PC-3 (cell line): ENCODE measurements at regions of chr5 and their contacts with region 1.

Region 1: GRCh38 chr5:142841511-142842265 is 71.5 kb downstream of the ARHGAP26 start:
- DNase-seq: no peak
- ATAC-seq: no peak
- H3K4me3 ChIP-seq: no peak overlapping the region
- H3K27ac ChIP-seq: no peak overlapping the region
- H3K4me1 ChIP-seq: peaks cover 45% of the 10 kb centered on the region
- H3K27me3 ChIP-seq: no peaks in the 10 kb centered on the region
- CTCF ChIP-seq: no peak

Region 2: DNA sequence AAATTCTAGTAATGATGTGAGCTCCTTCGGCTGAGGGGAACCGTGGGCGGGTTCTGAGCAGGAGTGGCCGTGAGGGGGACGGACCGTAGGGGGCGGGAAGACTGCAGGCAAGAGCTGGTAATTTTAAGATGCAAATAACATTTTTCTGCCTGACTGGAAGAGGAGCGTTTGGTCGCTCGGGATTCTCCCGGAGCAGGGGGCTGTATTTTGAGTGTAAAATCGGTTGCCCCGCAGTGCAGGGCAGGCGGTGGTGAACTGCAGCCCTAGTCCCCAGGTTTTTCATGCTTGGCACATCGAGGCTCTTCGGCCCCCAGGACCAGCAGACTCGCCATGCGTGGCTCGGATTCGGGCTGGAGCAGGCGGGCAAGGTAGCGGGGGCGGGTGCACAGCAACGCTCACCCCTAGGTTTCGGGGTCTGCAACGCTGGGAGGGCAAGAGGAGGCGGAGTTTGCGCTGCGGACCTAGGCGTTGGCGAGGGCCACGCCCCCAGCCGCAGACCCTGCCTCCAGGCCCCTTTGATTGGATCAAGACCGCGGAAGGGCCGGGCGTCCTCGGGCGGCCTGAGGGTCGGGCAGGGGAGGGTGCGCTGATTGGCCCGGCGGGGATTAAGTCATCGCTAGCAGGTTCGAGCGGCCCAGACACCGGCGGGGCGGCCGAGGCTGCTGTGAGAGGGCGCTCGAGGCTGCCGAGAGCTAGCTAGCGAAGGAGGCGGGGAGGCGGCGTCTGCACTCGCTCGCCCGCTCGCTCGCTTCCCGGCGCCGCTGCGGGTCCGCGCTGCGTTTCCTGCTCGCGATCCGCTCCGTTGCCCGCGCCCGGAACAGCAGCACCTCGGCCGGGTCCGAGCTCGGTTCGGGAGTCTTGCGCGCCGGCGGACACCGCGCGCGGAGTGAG is 71.7 kb before region 1 on chr5 and contains the start of gene ARHGAP26:
- CTCF ChIA-PET with region 1: no interaction called
- POLR2A ChIA-PET with region 1: no interaction called
- intact Hi-C with region 1: loop called (anchors 1 kb)
- DNase-seq: peak; percentile 92
- ATAC-seq: peak; percentile 94
- H3K4me3 ChIP-seq: peak within 1 kb of the TSS; percentile 97
- H3K27ac ChIP-seq: peak within 1 kb of the TSS; percentile 29
- H3K4me1 ChIP-seq: peaks cover 19% of the 10 kb centered on the region
- H3K27me3 ChIP-seq: no peaks in the 10 kb centered on the region
- CTCF ChIP-seq: no peak
- total RNA-seq, gene ARHGAP26: 6.2 and 11.7 TPM in 2 replicates

Region 3: DNA sequence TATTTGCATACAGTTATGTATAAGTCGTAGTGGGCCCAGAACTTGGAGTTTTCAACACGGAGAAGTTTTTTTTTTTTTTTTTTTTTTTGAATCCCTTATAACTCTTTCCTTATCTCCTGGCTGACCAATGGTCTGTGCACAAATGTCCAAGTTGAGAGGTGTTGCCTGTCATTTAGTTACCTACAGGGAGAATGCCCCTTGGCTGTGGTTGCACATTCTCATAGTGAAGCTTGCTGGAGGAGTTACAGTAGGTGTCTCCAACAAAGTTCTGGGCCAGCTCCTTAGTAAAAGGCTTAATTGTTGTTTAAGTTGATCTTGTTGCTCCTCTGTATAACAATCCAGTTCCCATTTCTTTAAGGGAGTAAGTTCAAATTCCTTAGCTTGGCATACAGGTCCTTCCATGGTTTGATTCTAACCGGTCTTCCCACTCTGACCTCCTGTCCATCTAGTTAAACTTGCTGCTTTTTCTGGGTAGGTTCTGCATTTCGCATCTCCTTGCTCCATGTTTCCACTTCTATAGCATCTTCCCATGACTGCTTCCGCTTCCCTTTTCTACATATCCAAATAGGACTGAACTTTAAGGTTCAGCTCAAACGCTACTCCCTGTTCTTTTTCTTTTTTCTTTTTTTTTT is 23.8 kb after region 1 on chr5:
- CTCF ChIA-PET with region 1: interaction called, 5 read pairs
- POLR2A ChIA-PET with region 1: no interaction called
- intact Hi-C with region 1: loop called (anchors 2 kb)
- DNase-seq: no peak
- ATAC-seq: no peak
- H3K4me3 ChIP-seq: no peak overlapping the region
- H3K27ac ChIP-seq: no peak overlapping the region
- H3K4me1 ChIP-seq: peaks cover 13% of the 10 kb centered on the region
- H3K27me3 ChIP-seq: no peaks in the 10 kb centered on the region
- CTCF ChIP-seq: no peak